ENCODE measurements at regions of chr2 and their contacts with region 1.

Region 1: DNA sequence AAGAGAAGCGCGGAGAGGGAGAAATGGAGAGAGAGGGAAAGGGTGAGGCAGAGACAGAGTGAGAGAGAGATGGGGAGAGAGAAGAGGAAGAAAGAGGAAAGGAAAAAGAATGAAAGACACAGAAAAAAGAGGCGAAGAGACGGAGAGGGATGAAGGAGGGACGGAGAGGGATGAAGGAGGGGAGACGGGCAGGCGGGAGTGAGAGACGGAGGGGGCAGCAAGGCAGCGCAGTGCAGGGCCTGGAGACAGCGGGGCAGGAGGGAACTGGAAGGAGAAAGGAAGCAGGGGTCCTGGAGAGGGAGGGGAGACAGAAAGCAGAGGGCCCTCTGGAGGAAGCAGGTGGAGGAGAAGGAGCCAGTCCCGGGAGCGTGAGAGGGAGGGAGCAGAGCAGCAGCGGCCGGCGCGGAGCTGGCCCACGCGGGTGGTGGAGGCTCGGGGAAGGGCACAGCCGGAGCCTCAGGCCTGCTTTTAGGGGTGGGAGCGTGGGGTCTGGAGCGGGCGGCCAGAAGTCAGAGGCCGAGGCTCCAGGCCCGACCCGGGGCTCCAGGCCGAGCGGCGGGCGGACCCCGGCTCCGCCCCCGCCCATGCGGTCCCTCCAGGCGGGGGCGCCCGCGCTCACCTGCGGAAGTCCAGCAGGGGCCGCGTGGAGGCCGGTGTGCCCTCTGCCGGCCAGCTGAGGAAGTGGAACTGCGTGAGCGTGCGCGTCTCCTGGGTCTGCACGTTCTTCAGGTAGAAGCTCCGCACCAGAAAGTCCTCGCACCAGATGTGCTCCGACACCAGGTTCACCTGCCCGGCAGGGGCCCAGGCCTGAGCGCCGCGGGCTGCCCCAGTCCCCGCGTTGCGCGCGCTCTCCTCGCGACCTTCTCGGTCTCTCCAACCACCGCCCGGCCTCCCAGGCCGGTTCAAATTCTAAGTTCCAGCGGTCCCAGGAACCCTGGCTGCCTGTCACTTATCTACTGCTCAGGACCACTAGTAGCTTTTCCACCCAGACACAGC is 14.5 kb downstream of the PTPRN start:
- DNase-seq: peak; percentile 83 to 92 (median 88)
- H3K4me3 ChIP-seq: peak overlapping the region; percentile 51
- H3K4me3 Mint-ChIP-seq: peak overlapping the region; percentile 54 to 81 (median 75)
- H3K27ac ChIP-seq: peak overlapping the region; percentile 55
- H3K27ac Mint-ChIP-seq: peak overlapping the region in 7 of 8 donors; percentile 29 to 96 (median 86)
- H3K4me1 ChIP-seq: peaks cover 22% of the 10 kb centered on the region
- H3K4me1 Mint-ChIP-seq: peaks cover 10 to 21% (median 16%) of the 10 kb centered on the region in 3 donors
- H3K27me3 ChIP-seq: peaks cover 4% of the 10 kb centered on the region
- H3K27me3 Mint-ChIP-seq: peaks cover 5 to 6% of the 10 kb centered on the region in 2 donors

Region 2: DNA sequence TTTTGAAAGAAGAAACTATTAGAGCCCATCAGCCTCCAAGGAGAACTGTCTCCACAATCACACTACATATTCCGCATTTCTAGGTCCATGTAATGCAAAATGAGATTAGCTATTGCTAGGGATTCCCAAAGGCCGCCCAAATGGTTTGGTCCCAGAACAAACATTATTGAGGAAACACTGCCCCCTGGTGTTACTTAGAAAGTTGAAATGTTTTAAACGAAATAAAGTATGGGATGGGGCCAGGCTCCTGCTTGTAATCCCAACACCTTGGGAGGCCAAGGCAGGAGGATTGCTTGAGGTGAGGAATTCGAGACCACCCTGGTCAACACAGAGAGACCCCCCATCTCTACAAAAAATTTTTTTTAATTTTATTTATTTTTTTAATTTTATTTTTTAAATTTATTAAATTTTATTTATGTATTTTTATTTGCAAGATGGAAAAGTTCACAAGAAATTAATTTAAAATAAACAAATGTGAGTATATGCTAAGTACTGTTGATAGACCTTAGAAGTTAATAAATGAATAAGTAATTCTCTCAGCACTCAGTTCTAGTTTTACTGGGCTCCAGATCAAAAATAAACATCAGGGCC is 139.5 kb before region 1 on chr2:
- CTCF ChIA-PET with region 1: interaction called, 61 read pairs
- POLR2A ChIA-PET with region 1: no interaction called
- DNase-seq: peak in 3 of 5 donors; percentile 44 to 60 (median 55)
- H3K4me3 ChIP-seq: no peak overlapping the region
- H3K4me3 Mint-ChIP-seq: no peak overlapping the region
- H3K27ac ChIP-seq: no peak overlapping the region
- H3K27ac Mint-ChIP-seq: peak overlapping the region in 1 of 8 donors; percentile 65
- H3K4me1 ChIP-seq: peaks cover 6% of the 10 kb centered on the region
- H3K4me1 Mint-ChIP-seq: peaks cover 7 to 10% (median 8%) of the 10 kb centered on the region in 3 donors
- H3K27me3 ChIP-seq: no peaks in the 10 kb centered on the region
- H3K27me3 Mint-ChIP-seq: peaks cover 0 to 2% of the 10 kb centered on the region in 2 donors

Region 3: DNA sequence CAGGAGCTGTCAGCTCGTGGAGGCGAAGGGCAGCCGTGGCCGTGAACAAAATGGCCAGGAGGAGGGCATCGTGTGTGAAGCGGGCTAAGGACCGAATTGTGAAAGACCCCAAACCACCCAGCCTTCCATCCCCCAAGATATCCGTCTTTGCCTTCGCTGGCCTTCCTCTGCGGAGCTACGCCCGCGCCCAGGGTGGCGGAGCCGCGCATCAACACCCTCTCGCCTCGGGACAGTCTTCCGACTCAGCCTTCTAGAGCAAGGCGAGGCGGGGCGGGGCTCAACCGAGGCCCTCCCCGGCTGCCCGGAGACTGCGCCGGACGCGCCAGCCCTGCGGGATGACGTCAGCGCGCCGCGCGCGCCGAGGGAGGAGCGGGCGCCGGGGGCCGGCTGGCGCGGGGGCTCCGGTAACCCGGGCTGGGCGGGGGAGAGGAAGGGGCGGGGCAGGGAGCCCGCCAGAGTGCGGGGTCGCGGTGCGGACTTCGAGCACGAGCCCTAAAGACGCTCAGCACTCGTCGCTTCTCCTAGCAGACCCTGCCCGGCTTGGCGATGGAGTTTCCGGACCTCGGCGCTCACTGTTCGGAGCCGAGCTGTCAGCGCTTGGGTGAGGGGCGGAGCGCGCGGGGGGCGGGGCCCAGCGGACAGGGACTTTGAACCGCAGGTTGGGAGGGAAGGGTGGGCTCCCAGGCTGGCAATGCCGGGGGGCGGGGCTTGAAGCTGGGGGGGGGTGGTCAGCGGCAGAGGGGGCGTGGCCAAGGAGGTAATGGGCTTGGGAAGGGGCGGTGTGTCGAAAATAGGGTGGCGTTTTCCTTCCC is 88.0 kb before region 1 on chr2 and contains the start of gene ZFAND2B:
- CTCF ChIA-PET with region 1: interaction called, 68 read pairs
- POLR2A ChIA-PET with region 1: interaction called, 5 read pairs
- DNase-seq: peak; percentile 95 to 98 (median 96)
- H3K4me3 ChIP-seq: peak within 1 kb of the TSS; percentile 81
- H3K4me3 Mint-ChIP-seq: peak within 1 kb of the TSS; percentile 88 to 97 (median 94)
- H3K27ac ChIP-seq: peak within 1 kb of the TSS; percentile 85
- H3K27ac Mint-ChIP-seq: peak within 1 kb of the TSS; percentile 95 to 99 (median 96)
- H3K4me1 ChIP-seq: peaks cover 29% of the 10 kb centered on the region
- H3K4me1 Mint-ChIP-seq: peaks cover 32 to 53% (median 49%) of the 10 kb centered on the region in 3 donors
- H3K27me3 ChIP-seq: no peaks in the 10 kb centered on the region
- H3K27me3 Mint-ChIP-seq: no peaks in the 10 kb centered on the region
- total RNA-seq, gene ZFAND2B: 32.4 to 36.8 TPM

Region 4: GRCh38 chr2:219245148-219245898 is 49.3 kb before region 1 on chr2 and contains the starts of genes GLB1L and STK16:
- CTCF ChIA-PET with region 1: interaction called, 132 read pairs
- POLR2A ChIA-PET with region 1: interaction called, 13 read pairs
- DNase-seq: peak; percentile 79 to 93 (median 83)
- H3K4me3 ChIP-seq: peak within 1 kb of the TSS; percentile 86
- H3K4me3 Mint-ChIP-seq: peak within 1 kb of the TSS; percentile 84 to 99 (median 91)
- H3K27ac ChIP-seq: peak within 1 kb of the TSS; percentile 93
- H3K27ac Mint-ChIP-seq: peak within 1 kb of the TSS; percentile 91 to 98 (median 98)
- H3K4me1 ChIP-seq: peaks cover 56% of the 10 kb centered on the region
- H3K4me1 Mint-ChIP-seq: peaks cover 54 to 66% (median 55%) of the 10 kb centered on the region in 3 donors
- H3K27me3 ChIP-seq: no peaks in the 10 kb centered on the region
- H3K27me3 Mint-ChIP-seq: peaks cover 0 to 6% of the 10 kb centered on the region in 2 donors
- total RNA-seq, gene GLB1L: 2.6 to 3.5 TPM
- total RNA-seq, gene STK16: 23.0 to 26.1 TPM

Region 5: GRCh38 chr2:219278655-219279516 is 15.8 kb before region 1 on chr2 and contains the start of gene DNAJB2:
- CTCF ChIA-PET with region 1: interaction called, 258 read pairs
- POLR2A ChIA-PET with region 1: interaction called, 24 read pairs
- DNase-seq: peak; percentile 99 to 100 (median 99)
- H3K4me3 ChIP-seq: peak within 1 kb of the TSS; percentile 72
- H3K4me3 Mint-ChIP-seq: peak within 1 kb of the TSS; percentile 89 to 98 (median 93)
- H3K27ac ChIP-seq: peak within 1 kb of the TSS; percentile 99
- H3K27ac Mint-ChIP-seq: peak within 1 kb of the TSS; percentile 97 to 100 (median 100)
- H3K4me1 ChIP-seq: peaks cover 32% of the 10 kb centered on the region
- H3K4me1 Mint-ChIP-seq: peaks cover 31 to 54% (median 41%) of the 10 kb centered on the region in 3 donors
- H3K27me3 ChIP-seq: no peaks in the 10 kb centered on the region
- H3K27me3 Mint-ChIP-seq: no peaks in the 10 kb centered on the region
- total RNA-seq, gene DNAJB2: 48.5 to 56.4 TPM

Region 6: DNA sequence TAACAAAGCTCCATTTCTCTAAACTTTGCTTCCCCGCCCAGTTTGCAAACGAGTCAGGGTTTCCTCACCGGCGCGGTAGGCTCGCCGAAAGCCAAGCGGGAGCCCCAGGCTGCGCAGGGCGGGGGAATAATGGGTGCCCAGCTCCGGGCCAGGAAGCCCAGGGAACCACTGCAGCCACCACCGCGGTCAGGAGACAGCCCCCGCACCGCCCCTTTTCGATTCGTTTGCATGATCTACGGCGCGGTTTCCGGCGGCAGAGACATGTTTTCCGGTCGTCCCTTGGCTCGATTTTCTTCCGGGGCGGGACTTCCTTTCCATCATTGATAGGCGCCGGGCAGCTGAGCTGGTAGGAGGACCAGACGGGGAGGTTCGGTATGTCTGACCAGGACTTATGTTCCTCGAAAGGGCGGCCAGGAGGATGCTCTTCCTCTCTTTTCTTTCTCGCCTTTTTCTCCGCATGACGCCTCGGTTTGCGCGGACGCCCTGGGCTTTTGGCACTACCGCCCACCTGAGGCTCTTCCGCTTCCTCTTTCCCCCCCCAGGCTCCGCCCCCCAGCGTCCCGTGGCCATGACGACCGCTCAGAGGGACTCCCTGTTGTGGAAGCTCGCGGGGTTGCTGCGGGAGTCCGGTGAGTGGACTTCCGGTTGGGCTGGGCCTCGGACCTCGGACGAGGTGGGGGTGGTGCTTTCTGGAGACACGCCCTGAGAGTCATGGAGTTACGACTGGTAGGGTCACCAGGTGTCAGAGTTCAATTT is 303.1 kb after region 1 on chr2 and contains the start of gene STK11IP:
- CTCF ChIA-PET with region 1: no interaction called
- POLR2A ChIA-PET with region 1: no interaction called
- DNase-seq: peak; percentile 86 to 91 (median 88)
- H3K4me3 ChIP-seq: peak within 1 kb of the TSS; percentile 69
- H3K4me3 Mint-ChIP-seq: peak within 1 kb of the TSS; percentile 95 to 98 (median 97)
- H3K27ac ChIP-seq: peak within 1 kb of the TSS; percentile 72
- H3K27ac Mint-ChIP-seq: peak within 1 kb of the TSS; percentile 91 to 98 (median 98)
- H3K4me1 ChIP-seq: peaks cover 14% of the 10 kb centered on the region
- H3K4me1 Mint-ChIP-seq: peaks cover 15 to 26% (median 26%) of the 10 kb centered on the region in 3 donors
- H3K27me3 ChIP-seq: no peaks in the 10 kb centered on the region
- H3K27me3 Mint-ChIP-seq: peaks cover 1 to 11% of the 10 kb centered on the region in 2 donors
- total RNA-seq, gene STK11IP: 26.2 to 32.2 TPM